Activated T-helper 1 cell treated with anti-CD3 and anti-CD28 coated beads, Interleukin-12 subunit alpha, Interleukin-12 subunit beta, Interleukin-2, Interleukin-4 antibody, amounts not matched to agents 30 ng/mL and 10 ng/mL and 1 ng/mL, durations not matched to agents 14 hours and 24 hours and 36 hours (primary cell): ENCODE measurements at regions of chr16 and their contacts with region 1.

Region 1: GRCh38 chr16:58629572-58630104 is at the start of gene CNOT1:
- DNase-seq: peak; percentile 99
- H3K4me3 Mint-ChIP-seq: peak within 1 kb of the TSS; percentile 94
- H3K27ac Mint-ChIP-seq: peak within 1 kb of the TSS; percentile 100
- H3K4me1 Mint-ChIP-seq: peaks cover 29% of the 10 kb centered on the region
- H3K27me3 Mint-ChIP-seq: no peaks in the 10 kb centered on the region
- total RNA-seq, gene CNOT1: 270 and 272 TPM in 2 replicates

Region 2: GRCh38 chr16:58198022-58198683 is 431.5 kb before region 1 on chr16 and contains the start of gene CSNK2A2:
- intact Hi-C with region 1: loop called (anchors 1 kb)
- DNase-seq: peak; percentile 58
- H3K4me3 Mint-ChIP-seq: peak within 1 kb of the TSS; percentile 92
- H3K27ac Mint-ChIP-seq: peak within 1 kb of the TSS; percentile 79
- H3K4me1 Mint-ChIP-seq: peaks cover 34% of the 10 kb centered on the region
- H3K27me3 Mint-ChIP-seq: peaks cover 6% of the 10 kb centered on the region
- total RNA-seq, gene CSNK2A2: 93.1 and 99.6 TPM in 2 replicates

Region 3: DNA sequence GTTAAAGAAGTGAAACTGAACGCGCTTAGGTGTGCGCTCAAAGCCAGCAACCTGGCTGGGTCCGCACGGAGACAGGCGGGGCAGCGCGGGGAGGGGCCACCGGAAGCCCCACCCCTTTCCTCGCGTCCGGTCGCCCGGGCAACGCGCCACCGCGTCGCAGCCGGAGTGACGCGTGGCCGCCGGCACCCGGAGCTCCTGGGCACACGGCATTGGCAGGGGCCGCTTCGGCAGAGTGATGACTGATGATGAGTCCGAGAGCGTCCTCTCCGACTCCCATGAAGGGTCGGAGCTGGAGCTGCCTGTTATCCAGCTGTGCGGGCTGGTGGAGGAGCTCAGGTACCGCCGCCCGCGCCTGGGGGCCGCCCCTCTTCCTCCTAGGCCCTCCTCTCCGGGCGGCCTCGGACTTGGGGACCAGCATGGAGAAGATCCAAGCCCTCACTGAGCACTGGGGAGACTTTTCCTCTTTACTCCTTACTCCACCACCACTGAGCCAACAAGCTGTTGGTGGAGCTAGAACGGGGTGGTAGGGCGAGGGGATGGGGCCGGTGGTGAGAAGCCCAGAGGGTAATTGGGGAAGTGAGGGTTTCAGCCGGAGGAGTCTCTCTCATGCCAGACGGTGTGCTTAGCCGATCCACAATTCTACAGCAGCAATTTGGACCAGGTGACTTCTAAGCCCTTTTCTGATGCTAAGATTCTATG is 379.7 kb before region 1 on chr16:
- intact Hi-C with region 1: loop called (anchors 2 kb)
- DNase-seq: peak; percentile 83
- H3K4me3 Mint-ChIP-seq: peak overlapping the region; percentile 86
- H3K27ac Mint-ChIP-seq: no peak overlapping the region
- H3K4me1 Mint-ChIP-seq: peaks cover 6% of the 10 kb centered on the region
- H3K27me3 Mint-ChIP-seq: peaks cover 4% of the 10 kb centered on the region

Region 4: GRCh38 chr16:58515125-58515870 is 114.3 kb before region 1 on chr16 and contains the start of gene SETD6:
- intact Hi-C with region 1: loop called (anchors 1 kb)
- DNase-seq: peak; percentile 77
- H3K4me3 Mint-ChIP-seq: peak within 1 kb of the TSS; percentile 92
- H3K27ac Mint-ChIP-seq: peak within 1 kb of the TSS; percentile 83
- H3K4me1 Mint-ChIP-seq: peaks cover 36% of the 10 kb centered on the region
- H3K27me3 Mint-ChIP-seq: no peaks in the 10 kb centered on the region
- total RNA-seq, gene SETD6: 32.1 and 34.9 TPM in 2 replicates

Region 5: DNA sequence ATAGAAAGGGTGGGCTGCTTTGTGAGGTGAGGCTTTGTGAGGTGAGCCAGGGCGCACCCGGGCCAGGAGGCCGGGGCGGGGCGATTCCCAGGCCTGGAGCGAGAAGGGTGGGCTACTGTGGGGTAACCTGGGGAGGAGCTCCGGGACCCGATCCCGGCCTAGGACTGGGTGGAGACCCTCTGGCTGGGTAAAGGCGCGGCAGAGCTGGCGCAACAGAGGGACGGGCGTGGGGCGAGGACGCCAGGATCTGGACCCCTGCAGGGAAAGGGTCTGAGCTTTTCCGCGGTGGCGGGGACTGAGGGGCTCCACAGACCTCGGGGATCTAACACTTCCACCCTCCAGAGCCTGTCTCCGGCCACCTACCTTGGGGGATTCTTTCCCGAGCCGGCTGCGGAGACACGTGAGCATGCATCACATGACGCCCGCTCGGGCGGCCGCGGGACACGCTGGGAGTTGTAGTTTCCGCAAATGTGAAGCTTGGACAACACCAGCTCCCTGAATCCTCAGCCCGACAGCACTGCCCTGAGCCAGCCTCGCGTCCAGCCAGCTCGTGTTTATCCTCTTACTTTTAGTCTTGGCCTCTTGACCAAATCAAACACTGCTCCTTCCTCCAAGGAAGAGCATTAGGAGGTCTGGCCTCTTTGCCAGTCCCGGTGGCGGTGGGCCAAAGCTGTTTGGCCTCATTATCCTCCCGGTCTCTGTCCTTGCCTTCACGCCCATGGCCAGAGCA is 54.9 kb after region 1 on chr16 and contains the start of gene SLC38A7:
- intact Hi-C with region 1: loop called (anchors 1 kb)
- DNase-seq: peak; percentile 72
- H3K4me3 Mint-ChIP-seq: peak within 1 kb of the TSS; percentile 90
- H3K27ac Mint-ChIP-seq: peak within 1 kb of the TSS; percentile 77
- H3K4me1 Mint-ChIP-seq: peaks cover 14% of the 10 kb centered on the region
- H3K27me3 Mint-ChIP-seq: peaks cover 7% of the 10 kb centered on the region
- total RNA-seq, gene SLC38A7: 9.3 and 11.8 TPM in 2 replicates

Region 6: DNA sequence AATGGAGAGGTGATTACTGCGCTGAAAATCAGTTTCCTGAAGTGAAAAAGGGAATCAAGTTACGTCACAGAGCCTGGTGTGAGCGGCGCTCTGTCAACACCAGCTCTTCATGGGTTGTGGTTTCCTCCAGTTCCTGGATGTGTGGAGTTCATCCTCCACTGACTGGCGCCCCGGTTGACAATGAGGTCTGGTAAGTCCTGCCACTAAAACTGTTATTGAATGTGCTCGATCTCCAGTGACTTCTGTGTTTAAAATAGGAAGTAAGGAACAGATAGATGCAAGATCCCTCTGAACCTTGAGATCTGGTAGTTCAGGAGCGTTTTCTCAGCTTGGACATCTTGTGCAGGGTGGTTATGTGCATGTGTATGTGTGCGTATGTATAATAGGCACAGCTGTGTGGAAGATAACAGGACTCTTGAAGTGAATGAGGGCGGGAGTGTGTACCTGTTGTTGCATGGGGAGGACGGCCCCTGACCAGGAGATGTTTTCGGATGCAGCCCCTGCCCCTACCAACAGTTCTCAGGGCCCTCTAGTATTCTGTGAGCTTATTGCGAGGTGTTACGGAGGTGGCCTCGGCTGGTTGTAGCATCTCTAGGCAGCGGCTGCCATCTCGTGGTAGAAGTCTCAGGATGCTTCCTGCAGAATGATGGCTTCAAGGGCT is 126.5 kb after region 1 on chr16:
- intact Hi-C with region 1: loop called (anchors 1 kb)
- DNase-seq: peak; percentile 65
- H3K4me3 Mint-ChIP-seq: peak overlapping the region; percentile 32
- H3K27ac Mint-ChIP-seq: peak overlapping the region; percentile 53
- H3K4me1 Mint-ChIP-seq: peaks cover 10% of the 10 kb centered on the region
- H3K27me3 Mint-ChIP-seq: peaks cover 5% of the 10 kb centered on the region